ENCODE measurements at regions of chr7 and their contacts with region 1.

Region 1: DNA sequence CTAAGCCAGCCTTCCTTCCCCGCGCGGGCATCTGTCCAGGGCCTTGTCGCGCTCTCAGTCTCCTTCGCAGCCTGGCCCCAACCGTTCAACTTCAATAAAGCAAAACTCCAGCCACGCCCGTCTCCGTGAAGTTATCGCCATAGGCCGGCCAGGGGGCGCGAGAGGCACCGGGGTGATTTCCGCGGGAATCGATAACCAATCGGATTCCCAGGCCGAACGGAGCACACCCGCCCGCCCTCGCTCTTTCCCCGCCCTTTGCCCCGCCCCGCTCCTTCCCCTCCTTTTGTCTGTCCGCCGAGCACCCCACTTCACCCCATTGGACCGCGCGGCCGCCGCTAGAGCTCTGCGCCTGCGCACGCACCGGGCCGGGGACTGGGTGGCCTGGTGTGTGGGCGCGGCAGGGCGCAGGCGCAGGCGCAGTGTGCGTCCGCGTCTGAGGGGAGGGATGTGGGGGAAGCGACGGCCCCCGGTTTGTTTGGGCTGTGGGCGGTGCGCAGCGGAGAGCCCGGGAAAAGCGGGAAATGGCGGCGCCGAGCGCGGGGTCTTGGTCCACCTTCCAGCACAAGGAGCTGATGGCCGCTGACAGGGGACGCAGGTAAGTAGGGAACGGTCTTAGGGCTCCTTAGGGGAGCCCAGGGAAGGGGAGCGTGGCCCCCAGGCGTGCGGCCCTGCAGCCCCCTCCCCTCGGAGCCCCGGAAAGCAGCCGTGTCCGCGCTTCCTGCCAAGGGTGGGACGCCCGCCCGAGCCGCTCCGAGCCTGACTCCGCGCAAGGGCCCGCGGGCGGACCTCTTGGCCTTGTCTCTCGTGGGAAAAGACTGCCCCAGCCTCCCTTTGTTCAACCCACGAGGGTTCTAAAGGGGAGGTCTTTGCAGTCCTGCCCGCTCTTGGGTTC is at the start of gene CASP2:
- DNase-seq: peak; percentile 100

Region 2: GRCh38 chr7:143263266-143264195 is 24.6 kb before region 1 on chr7 and contains the start of gene GSTK1:
- CTCF ChIA-PET with region 1: interaction called, 3 read pairs
- POLR2A ChIA-PET with region 1: interaction called, 29 read pairs
- DNase-seq: peak; percentile 90

Measured in HEK293T (cell line).